GM10248 (cell line): ENCODE measurements at regions of chr10 and their contacts with region 1.

Region 1: DNA sequence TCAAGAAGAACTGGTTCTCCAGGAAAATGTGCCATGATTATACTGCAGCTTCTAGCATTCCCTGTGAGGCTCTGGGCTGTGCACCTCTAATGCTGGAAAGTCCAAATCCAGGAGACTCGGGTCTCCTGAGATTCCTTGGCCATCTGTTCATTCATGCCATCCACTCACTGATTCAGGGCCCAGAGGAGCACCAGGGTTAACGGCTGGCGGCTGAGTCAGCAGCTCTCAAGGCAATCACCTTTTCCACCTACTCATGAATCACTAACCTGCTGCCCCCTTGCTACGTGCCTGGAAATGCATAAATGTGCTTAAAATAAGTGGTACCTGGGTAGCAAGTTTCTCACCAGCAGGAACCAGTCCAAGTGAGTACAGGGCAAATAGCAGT is 132.7 kb downstream of the KCNMA1 start:
- DNase-seq: no peak
- CTCF ChIP-seq: no peak

Region 2: GRCh38 chr10:77467422-77467963 is 37.4 kb before region 1 on chr10:
- CTCF ChIA-PET with region 1: no interaction called
- POLR2A ChIA-PET with region 1: no interaction called
- DNase-seq: no peak
- CTCF ChIP-seq: no peak

Region 3: DNA sequence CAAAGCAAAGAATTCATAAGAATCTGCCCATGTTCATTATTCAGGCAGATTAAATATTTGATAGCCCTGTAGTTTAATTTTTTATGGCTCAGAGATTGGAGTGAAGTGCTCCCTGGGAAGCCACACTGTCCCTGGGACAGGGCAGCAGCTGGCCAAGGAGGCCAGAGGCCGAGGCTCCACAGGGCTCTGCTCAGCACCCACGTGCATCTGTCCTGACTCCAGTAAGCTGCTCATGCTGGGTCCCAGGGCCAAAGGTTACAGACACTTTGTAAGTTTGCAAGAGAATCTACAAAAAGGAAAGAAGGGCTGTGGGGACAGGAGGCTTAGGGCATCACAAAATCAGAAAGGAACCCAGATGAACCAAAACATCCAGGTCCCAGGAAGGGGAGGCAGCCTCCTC is 22.8 kb before region 1 on chr10:
- CTCF ChIA-PET with region 1: no interaction called
- POLR2A ChIA-PET with region 1: no interaction called
- DNase-seq: no peak
- CTCF ChIP-seq: no peak

Region 4: DNA sequence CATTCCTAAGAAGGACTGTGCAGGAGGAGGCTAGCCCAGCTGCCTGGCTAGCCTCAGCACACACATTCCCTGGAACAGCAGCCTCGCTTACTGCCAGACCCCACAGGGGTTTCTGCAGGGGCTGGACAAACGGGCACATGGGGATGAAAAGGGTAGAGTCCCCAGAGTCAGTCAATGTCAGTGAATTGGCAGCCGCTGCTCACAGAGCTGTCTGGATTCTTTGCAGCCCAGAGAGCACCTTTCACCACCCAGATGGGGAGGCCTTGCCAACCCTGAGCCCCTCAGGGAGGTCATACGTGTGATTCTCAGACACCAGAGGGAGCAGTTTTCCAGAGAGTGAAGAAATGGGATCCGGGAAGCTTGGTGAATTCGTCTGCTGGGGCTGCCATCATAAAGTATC is 10.5 kb before region 1 on chr10:
- CTCF ChIA-PET with region 1: interaction called, 13 read pairs
- POLR2A ChIA-PET with region 1: no interaction called
- DNase-seq: no peak
- CTCF ChIP-seq: no peak